ENCODE measurements at regions of chr5 and their contacts with region 1.

Region 1: GRCh38 chr5:36151434-36152323 is at the starts of genes LMBRD2 and SKP2:
- DNase-seq: peak; percentile 99
- ATAC-seq: peak; percentile 98
- H3K4me3 Mint-ChIP-seq: peak within 1 kb of the TSS; percentile 93
- H3K27ac Mint-ChIP-seq: peak within 1 kb of the TSS; percentile 83
- H3K4me1 Mint-ChIP-seq: peaks cover 54% of the 10 kb centered on the region
- H3K27me3 Mint-ChIP-seq: no peaks in the 10 kb centered on the region
- total RNA-seq, gene LMBRD2: 11.5 to 11.8 TPM
- total RNA-seq, gene SKP2: 54.6 to 61.4 TPM

Region 2: DNA sequence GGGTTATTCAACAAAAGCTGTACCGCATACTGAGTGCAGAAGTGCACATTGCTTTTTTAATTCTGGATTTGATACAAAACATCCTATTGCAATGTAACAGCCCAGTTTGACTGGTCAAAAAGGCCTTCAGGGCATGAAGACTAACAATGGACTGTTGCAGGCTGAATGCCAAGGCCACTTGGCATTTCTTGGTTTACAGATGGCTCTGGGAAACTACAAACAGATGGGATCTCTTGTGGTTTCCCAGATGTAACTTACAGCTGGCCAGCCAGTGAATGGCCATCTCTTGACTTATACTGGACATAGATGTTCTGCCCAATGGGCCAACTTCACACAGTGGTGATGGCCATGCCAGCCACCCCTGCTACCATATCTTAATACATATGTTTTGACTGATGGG is 121.8 kb before region 1 on chr5:
- CTCF ChIA-PET with region 1: no interaction called
- POLR2A ChIA-PET with region 1: no interaction called
- DNase-seq: no peak
- ATAC-seq: no peak
- H3K4me3 Mint-ChIP-seq: no peak overlapping the region
- H3K27ac Mint-ChIP-seq: no peak overlapping the region
- H3K4me1 Mint-ChIP-seq: no peaks in the 10 kb centered on the region
- H3K27me3 Mint-ChIP-seq: peaks cover 2% of the 10 kb centered on the region

Region 3: DNA sequence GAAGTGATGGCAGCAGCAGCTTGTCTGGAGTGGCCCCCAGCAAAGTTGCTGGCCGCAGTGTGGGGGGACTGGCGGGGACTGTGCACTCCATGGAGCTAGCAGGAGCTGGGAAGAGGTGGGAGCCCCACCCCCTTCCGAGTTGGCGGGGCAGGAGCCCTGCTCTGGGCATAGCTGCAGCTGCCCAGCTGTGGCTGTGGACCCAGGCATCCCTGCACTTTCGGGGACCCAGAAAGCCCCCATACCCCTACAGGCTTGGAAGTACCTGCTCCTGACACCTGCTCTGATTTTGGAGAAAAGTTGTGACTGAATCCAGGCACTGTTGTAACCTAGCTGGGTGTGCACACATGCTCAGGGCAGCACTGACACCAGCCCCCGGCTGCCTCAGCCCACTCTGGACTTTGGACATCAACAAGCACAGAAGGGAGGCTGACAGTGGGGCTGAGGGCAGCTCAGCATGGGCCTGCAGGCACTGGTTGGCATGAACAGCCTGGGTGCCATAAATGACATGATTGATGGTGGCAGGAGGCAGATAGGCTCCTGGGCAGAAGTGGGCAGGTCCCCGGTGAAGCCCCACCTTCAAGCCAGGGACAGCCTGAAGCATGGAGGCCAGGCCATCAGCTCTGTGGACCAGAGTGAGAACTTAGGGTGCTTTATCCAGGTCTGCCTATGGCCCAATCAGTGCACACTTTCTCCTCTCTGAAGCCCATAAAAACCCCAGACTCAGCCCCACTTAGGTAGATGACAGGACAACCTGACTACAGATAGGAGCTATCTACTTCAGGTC is 12.6 kb before region 1 on chr5:
- CTCF ChIA-PET with region 1: interaction called, 5 read pairs
- POLR2A ChIA-PET with region 1: interaction called, 17 read pairs
- DNase-seq: no peak
- ATAC-seq: no peak
- H3K4me3 Mint-ChIP-seq: no peak overlapping the region
- H3K27ac Mint-ChIP-seq: no peak overlapping the region
- H3K4me1 Mint-ChIP-seq: no peaks in the 10 kb centered on the region
- H3K27me3 Mint-ChIP-seq: no peaks in the 10 kb centered on the region

Measured in activated CD8-positive, alpha-beta T cell treated with anti-CD3 and anti-CD28 coated beads, Interleukin-2, amount 10 ng/mL, durations not matched to agents 7 days and 5 days (primary cell).